ENCODE measurements at regions of chr5 and their contacts with region 1.

Region 1: DNA sequence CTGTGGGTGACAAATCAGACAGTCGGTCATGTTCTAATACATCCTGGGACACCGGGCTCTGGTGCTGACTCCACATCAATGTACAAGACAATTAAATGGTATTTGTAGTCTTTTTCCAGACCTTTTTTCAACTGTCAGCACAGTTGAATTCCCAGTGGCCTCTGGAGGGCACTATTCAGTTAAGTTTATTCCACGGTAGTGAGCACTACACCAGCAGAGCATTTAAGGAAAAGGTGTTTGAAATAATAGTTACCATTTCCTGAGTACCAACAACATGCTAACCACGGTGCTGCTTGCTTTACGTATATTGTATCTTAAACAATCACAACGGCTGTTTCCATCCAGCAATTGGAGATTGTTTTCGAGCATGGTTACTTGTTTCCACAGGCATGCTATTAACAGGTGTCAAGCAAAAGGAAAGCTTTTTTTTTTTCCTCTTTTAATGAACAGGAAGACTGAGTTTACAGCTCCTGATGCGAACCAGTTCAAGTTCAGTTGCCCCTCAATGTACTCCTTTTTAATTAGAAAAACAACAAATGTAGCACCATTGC is 186.7 kb downstream of the PDZD2 start:
- DNase-seq: no peak
- H3K4me3 ChIP-seq: no peak overlapping the region
- H3K27ac ChIP-seq: no peak overlapping the region
- H3K4me1 ChIP-seq: peaks cover 0 to 7% (median 0%) of the 10 kb centered on the region in 4 donors
- H3K27me3 ChIP-seq: peaks cover 0 to 6% (median 0%) of the 10 kb centered on the region in 4 donors
- CTCF ChIP-seq: peak; percentile 64 to 67 (median 65)
- EP300 ChIP-seq: no peak
- POLR2A ChIP-seq: no peak

Region 2: GRCh38 chr5:31516802-31517201 is 308.8 kb before region 1 on chr5:
- intact Hi-C with region 1: no loop called
- DNase-seq: no peak
- H3K4me3 ChIP-seq: no peak overlapping the region
- H3K27ac ChIP-seq: no peak overlapping the region
- H3K4me1 ChIP-seq: no peaks in the 10 kb centered on the region
- H3K27me3 ChIP-seq: no peaks in the 10 kb centered on the region
- CTCF ChIP-seq: no peak
- EP300 ChIP-seq: no peak
- POLR2A ChIP-seq: no peak

Region 3: DNA sequence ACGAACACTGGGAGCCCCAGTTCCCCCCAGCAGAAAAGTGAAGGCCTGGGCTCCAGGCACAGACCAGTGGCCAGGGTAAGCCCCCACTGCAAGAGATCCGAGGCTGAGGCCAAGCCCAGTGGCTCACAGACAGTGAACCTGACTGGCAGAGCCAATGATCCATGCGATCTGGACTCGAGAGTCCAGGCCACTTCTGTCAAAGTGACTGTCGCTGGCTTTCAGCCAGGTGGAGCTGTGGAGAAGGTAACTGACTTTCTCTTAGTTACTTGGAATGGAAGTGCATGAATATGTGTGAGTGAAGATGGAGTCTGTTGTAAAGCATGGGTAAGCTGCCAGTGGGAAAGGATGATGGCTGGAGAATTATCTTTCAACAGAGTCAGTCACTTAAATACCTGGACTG is 248.8 kb after region 1 on chr5:
- intact Hi-C with region 1: loop called (anchors 2 kb)
- DNase-seq: no peak
- H3K4me3 ChIP-seq: no peak overlapping the region
- H3K27ac ChIP-seq: no peak overlapping the region
- H3K4me1 ChIP-seq: peaks cover 0 to 13% (median 0%) of the 10 kb centered on the region in 4 donors
- H3K27me3 ChIP-seq: no peaks in the 10 kb centered on the region
- CTCF ChIP-seq: no peak
- EP300 ChIP-seq: no peak
- POLR2A ChIP-seq: no peak

Region 4: GRCh38 chr5:32092938-32093812 is 267.6 kb after region 1 on chr5:
- intact Hi-C with region 1: loop called (anchors 5 kb)
- DNase-seq: peak; percentile 91
- H3K4me3 ChIP-seq: no peak overlapping the region
- H3K27ac ChIP-seq: no peak overlapping the region
- H3K4me1 ChIP-seq: peaks cover 15 to 25% (median 21%) of the 10 kb centered on the region in 4 donors
- H3K27me3 ChIP-seq: no peaks in the 10 kb centered on the region
- CTCF ChIP-seq: peak; percentile 65 to 74 (median 71)
- EP300 ChIP-seq: no peak
- POLR2A ChIP-seq: no peak

Region 5: DNA sequence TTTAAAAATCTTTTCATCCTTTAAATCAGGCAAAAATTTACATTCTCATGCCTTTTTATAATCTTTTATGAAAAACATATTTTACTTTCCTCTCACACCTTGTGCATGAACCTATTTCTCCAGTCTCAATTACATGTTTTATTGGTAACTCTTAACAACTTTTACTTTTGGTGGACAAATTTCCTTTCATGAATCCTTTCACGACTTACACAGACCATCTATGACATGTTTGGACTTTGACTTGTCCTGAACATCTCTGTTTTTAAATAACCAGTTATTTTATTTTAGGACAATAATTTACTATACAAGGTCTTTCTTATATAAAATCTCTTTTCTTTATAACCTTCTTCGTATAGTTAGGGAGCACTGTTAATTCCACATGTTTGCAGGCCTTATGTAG is 513.6 kb after region 1 on chr5:
- intact Hi-C with region 1: loop called (anchors 10 kb)
- DNase-seq: no peak
- H3K4me3 ChIP-seq: no peak overlapping the region
- H3K27ac ChIP-seq: no peak overlapping the region
- H3K4me1 ChIP-seq: no peaks in the 10 kb centered on the region
- H3K27me3 ChIP-seq: no peaks in the 10 kb centered on the region
- CTCF ChIP-seq: no peak
- EP300 ChIP-seq: no peak
- POLR2A ChIP-seq: no peak

Region 6: GRCh38 chr5:32461441-32462120 is 636.0 kb after region 1 on chr5:
- intact Hi-C with region 1: no loop called
- DNase-seq: no peak
- H3K4me3 ChIP-seq: no peak overlapping the region
- H3K27ac ChIP-seq: no peak overlapping the region
- H3K4me1 ChIP-seq: no peaks in the 10 kb centered on the region
- H3K27me3 ChIP-seq: no peaks in the 10 kb centered on the region
- CTCF ChIP-seq: no peak
- EP300 ChIP-seq: no peak
- POLR2A ChIP-seq: no peak

Measured in esophagus muscularis mucosa (tissue), 4 donors.